Activated CD4-positive, alpha-beta T cell treated with anti-CD3 and anti-CD28 coated beads, Interleukin-2, amount 10 ng/mL, durations not matched to agents 7 days and 5 days (primary cell): ENCODE measurements at regions of chr11 and their contacts with region 1.

Region 1: GRCh38 chr11:112226062-112226830 is at the start of gene PTS:
- DNase-seq: peak; percentile 85
- H3K4me3 Mint-ChIP-seq: peak within 1 kb of the TSS; percentile 82
- H3K27ac Mint-ChIP-seq: peak within 1 kb of the TSS; percentile 98
- H3K4me1 Mint-ChIP-seq: peaks cover 30% of the 10 kb centered on the region
- H3K27me3 Mint-ChIP-seq: peaks cover 7% of the 10 kb centered on the region
- total RNA-seq, gene PTS: 18.6 to 19.8 TPM

Region 2: DNA sequence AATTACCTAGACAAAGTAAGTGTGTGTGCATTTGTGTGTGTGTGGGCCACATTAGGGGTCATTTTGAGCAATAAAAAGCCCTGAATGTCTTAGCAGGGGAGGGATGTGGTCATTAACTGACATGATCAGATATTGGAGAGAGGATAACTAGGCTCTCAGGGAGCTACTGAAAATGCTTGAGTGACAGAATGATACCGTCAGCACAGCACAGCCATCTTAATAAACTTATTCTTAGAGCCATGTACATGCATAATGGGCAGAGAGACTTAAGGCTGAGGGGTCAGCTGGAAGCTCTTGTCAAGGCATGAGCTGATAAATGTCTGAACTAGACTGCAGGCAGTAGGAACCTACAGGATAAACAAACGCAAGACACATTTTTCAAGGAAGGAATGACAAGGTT is 495.9 kb after region 1 on chr11:
- CTCF ChIA-PET with region 1: no interaction called
- POLR2A ChIA-PET with region 1: interaction called, 10 read pairs
- DNase-seq: no peak
- H3K4me3 Mint-ChIP-seq: no peak overlapping the region
- H3K27ac Mint-ChIP-seq: no peak overlapping the region
- H3K4me1 Mint-ChIP-seq: no peaks in the 10 kb centered on the region
- H3K27me3 Mint-ChIP-seq: peaks cover 2% of the 10 kb centered on the region